ENCODE measurements at regions of chr5 and their contacts with region 1.

Region 1: DNA sequence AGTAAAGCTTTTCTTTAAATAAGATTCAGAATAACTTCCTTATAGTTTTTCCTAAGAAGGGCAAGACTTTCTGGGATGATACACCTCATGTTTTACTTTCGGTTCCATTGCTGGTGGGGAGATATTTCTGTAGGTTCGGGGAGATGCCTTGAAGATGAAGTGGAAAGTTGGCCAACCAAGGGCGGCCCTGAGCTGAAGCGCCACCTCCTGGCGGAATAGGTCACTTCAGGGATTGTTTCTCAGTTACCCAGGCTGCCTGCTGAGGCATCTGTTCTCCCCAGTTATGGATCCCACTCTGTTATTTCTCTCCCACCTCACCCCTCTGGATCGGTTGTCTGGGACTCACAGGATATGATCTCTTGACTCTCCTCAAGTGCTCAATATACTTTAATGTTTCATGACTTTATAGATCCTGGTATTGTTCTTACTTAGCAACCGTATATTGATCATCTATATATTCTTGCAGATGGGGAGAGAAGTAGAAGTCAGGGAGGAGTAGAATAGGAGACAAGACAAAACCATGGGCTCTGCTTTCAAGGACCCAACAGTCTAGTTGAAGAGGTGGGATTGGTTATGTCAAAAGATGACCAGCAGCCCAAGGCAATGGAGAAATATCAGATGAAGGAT is 23.4 kb downstream of the MEGF10 start:
- DNase-seq: peak; percentile 28 to 75 (median 59)
- ATAC-seq: peak; percentile 82
- H3K4me3 ChIP-seq: no peak overlapping the region
- H3K4me3 Mint-ChIP-seq: no peak overlapping the region
- H3K27ac ChIP-seq: no peak overlapping the region
- H3K27ac Mint-ChIP-seq: no peak overlapping the region
- H3K4me1 ChIP-seq: peaks cover 4% of the 10 kb centered on the region
- H3K4me1 Mint-ChIP-seq: no peaks in the 10 kb centered on the region
- H3K27me3 ChIP-seq: no peaks in the 10 kb centered on the region
- H3K27me3 Mint-ChIP-seq: peaks cover 5% of the 10 kb centered on the region
- CTCF ChIP-seq: peak; percentile 80

Region 2: DNA sequence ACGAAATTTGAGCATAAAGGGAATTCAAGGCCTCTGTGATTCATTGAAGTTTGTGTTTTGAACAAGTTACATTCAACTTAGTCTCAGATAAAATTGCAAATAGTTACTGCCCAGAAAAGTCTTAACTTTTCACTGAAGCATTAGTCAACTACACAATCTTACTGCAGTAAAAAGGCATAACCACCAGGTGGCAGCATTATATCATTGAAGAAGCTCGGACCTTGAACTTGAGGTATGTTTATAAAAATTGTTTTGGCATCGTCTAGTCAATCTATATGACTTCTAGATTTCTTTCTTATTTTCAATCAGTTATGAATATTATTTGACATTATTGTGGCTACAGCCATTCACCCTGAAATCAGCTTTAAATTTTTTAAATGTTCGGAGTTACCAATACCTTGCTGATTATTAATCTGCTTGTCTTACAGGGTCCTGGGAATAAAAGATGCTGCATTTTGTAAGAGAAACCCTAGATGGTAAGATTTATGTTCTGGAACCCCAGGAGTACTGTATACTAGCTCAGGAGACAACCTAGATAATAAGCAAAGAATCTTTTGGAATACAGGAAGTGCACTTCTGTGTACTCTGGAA is 974.6 kb before region 1 on chr5:
- CTCF ChIA-PET with region 1: no interaction called
- POLR2A ChIA-PET with region 1: no interaction called
- intact Hi-C with region 1: loop called in 1 of 2 experiments (anchors 10 kb)
- DNase-seq: peak in 10 of 14 experiments; percentile 12 to 79 (median 40)
- ATAC-seq: peak; percentile 46
- H3K4me3 ChIP-seq: no peak overlapping the region
- H3K4me3 Mint-ChIP-seq: no peak overlapping the region
- H3K27ac ChIP-seq: no peak overlapping the region
- H3K27ac Mint-ChIP-seq: no peak overlapping the region
- H3K4me1 ChIP-seq: no peaks in the 10 kb centered on the region
- H3K4me1 Mint-ChIP-seq: no peaks in the 10 kb centered on the region
- H3K27me3 ChIP-seq: peaks cover 4 to 21% of the 10 kb centered on the region in 2 experiments
- H3K27me3 Mint-ChIP-seq: peaks cover 42% of the 10 kb centered on the region
- CTCF ChIP-seq: peak; percentile 82

Region 3: GRCh38 chr5:126656396-126657007 is 657.5 kb before region 1 on chr5:
- CTCF ChIA-PET with region 1: no interaction called
- POLR2A ChIA-PET with region 1: no interaction called
- intact Hi-C with region 1: loop called (anchors 2 kb)
- DNase-seq: peak in 4 of 14 experiments; percentile 40 to 67 (median 56)
- ATAC-seq: no peak
- H3K4me3 ChIP-seq: no peak overlapping the region
- H3K4me3 Mint-ChIP-seq: no peak overlapping the region
- H3K27ac ChIP-seq: no peak overlapping the region
- H3K27ac Mint-ChIP-seq: no peak overlapping the region
- H3K4me1 ChIP-seq: no peaks in the 10 kb centered on the region
- H3K4me1 Mint-ChIP-seq: no peaks in the 10 kb centered on the region
- H3K27me3 ChIP-seq: no peaks in the 10 kb centered on the region
- H3K27me3 Mint-ChIP-seq: no peaks in the 10 kb centered on the region
- CTCF ChIP-seq: peak; percentile 83

Region 4: GRCh38 chr5:126676195-126676624 is 637.8 kb before region 1 on chr5:
- CTCF ChIA-PET with region 1: interaction called, 4 read pairs
- POLR2A ChIA-PET with region 1: no interaction called
- intact Hi-C with region 1: loop called (anchors 1 to 5 kb)
- DNase-seq: peak; percentile 39 to 86 (median 54)
- ATAC-seq: peak; percentile 90
- H3K4me3 ChIP-seq: no peak overlapping the region
- H3K4me3 Mint-ChIP-seq: no peak overlapping the region
- H3K27ac ChIP-seq: no peak overlapping the region
- H3K27ac Mint-ChIP-seq: no peak overlapping the region
- H3K4me1 ChIP-seq: peaks cover 4% of the 10 kb centered on the region
- H3K4me1 Mint-ChIP-seq: peaks cover 5% of the 10 kb centered on the region
- H3K27me3 ChIP-seq: no peaks in the 10 kb centered on the region
- H3K27me3 Mint-ChIP-seq: no peaks in the 10 kb centered on the region
- CTCF ChIP-seq: peak; percentile 82

Region 5: GRCh38 chr5:126837906-126838539 is 475.9 kb before region 1 on chr5:
- CTCF ChIA-PET with region 1: interaction called, 15 read pairs
- POLR2A ChIA-PET with region 1: no interaction called
- intact Hi-C with region 1: loop called (anchors 1 kb)
- DNase-seq: peak in 3 of 14 experiments; percentile 18 to 48 (median 44)
- ATAC-seq: peak; percentile 51
- H3K4me3 ChIP-seq: no peak overlapping the region
- H3K4me3 Mint-ChIP-seq: no peak overlapping the region
- H3K27ac ChIP-seq: no peak overlapping the region
- H3K27ac Mint-ChIP-seq: no peak overlapping the region
- H3K4me1 ChIP-seq: no peaks in the 10 kb centered on the region
- H3K4me1 Mint-ChIP-seq: no peaks in the 10 kb centered on the region
- H3K27me3 ChIP-seq: no peaks in the 10 kb centered on the region
- H3K27me3 Mint-ChIP-seq: no peaks in the 10 kb centered on the region
- CTCF ChIP-seq: peak; percentile 59

Region 6: DNA sequence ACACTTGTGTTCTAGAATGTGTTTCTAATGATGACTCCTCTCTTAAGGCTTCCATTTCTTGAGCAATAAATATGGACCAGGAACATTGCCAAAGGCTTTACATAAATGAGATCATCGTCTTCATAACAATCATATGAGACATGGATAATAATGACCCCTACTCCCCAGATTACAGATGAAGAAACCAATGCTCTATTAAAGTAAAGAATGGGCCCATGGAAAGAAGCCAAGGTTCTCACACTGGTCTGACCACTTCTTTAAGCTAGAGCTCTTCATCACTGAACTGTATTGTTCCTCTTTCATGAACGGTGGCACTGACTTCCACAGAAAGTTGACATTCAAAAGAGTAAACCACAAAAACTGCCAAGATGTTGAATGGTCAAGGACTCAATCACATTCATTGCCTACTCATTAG is 348.9 kb before region 1 on chr5:
- CTCF ChIA-PET with region 1: no interaction called
- POLR2A ChIA-PET with region 1: no interaction called
- intact Hi-C with region 1: loop called (anchors 1 to 10 kb)
- DNase-seq: no peak
- ATAC-seq: no peak
- H3K4me3 ChIP-seq: no peak overlapping the region
- H3K4me3 Mint-ChIP-seq: no peak overlapping the region
- H3K27ac ChIP-seq: no peak overlapping the region
- H3K27ac Mint-ChIP-seq: no peak overlapping the region
- H3K4me1 ChIP-seq: no peaks in the 10 kb centered on the region
- H3K4me1 Mint-ChIP-seq: peaks cover 4% of the 10 kb centered on the region
- H3K27me3 ChIP-seq: no peaks in the 10 kb centered on the region
- H3K27me3 Mint-ChIP-seq: no peaks in the 10 kb centered on the region
- CTCF ChIP-seq: no peak

Region 7: DNA sequence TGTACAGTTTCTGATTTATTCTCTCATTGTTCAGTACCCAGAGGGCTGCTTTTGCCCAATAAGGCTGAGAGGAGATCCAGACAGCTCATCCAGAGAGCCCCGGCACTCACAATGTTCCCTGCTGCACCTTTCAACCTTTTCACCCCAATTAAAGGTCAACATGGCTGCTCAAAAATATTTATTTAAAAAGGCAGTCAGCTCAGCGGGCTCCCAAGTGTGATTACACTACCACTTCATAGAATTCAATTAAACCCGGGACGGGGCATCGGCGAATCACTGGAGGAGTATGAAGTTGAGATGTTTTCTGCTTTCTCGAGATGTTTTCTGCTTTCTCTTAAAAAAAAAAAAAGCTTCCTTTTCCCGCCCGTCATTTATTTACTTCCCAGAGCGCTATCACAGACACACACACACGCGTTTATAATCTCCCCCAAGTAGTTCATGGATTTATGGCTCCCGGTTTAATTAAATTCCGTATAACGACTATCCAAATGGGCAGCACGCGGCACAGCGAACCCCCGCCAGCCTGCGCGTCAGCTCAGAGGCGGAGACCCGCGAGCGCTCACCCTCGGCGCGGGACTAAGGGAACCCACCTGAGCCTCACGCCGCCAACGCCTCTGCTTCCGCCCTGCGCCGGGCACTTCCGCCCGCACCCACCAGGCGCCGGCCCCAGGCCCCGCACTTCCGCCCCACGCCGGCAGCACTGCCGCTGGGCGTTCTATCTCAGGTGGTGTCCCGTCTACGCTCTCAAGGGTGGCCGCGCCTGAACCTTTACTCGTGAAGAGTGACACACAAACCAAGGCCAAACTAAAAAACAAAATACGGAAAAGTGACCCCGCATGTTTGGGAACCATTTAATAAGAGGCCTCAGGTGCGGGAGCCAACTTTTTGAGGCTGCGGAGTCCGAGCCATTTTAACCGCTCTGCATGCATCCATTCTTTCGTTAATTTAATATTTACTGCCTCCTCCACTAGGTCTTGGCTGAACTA is 240.8 kb before region 1 on chr5 and contains the start of gene C5orf63:
- CTCF ChIA-PET with region 1: no interaction called
- POLR2A ChIA-PET with region 1: no interaction called
- intact Hi-C with region 1: loop called in 1 of 2 experiments (anchors 10 kb)
- DNase-seq: peak; percentile 31 to 84 (median 56)
- ATAC-seq: peak; percentile 93
- H3K4me3 ChIP-seq: peak within 1 kb of the TSS; percentile 62
- H3K4me3 Mint-ChIP-seq: peak within 1 kb of the TSS; percentile 92
- H3K27ac ChIP-seq: peak within 1 kb of the TSS in 1 of 2 donors; percentile 4
- H3K27ac Mint-ChIP-seq: peak within 1 kb of the TSS; percentile 85
- H3K4me1 ChIP-seq: peaks cover 10% of the 10 kb centered on the region
- H3K4me1 Mint-ChIP-seq: peaks cover 34% of the 10 kb centered on the region
- H3K27me3 ChIP-seq: no peaks in the 10 kb centered on the region
- H3K27me3 Mint-ChIP-seq: no peaks in the 10 kb centered on the region
- CTCF ChIP-seq: no peak
- total RNA-seq, gene C5orf63: 5.1 to 5.7 TPM

Region 8: DNA sequence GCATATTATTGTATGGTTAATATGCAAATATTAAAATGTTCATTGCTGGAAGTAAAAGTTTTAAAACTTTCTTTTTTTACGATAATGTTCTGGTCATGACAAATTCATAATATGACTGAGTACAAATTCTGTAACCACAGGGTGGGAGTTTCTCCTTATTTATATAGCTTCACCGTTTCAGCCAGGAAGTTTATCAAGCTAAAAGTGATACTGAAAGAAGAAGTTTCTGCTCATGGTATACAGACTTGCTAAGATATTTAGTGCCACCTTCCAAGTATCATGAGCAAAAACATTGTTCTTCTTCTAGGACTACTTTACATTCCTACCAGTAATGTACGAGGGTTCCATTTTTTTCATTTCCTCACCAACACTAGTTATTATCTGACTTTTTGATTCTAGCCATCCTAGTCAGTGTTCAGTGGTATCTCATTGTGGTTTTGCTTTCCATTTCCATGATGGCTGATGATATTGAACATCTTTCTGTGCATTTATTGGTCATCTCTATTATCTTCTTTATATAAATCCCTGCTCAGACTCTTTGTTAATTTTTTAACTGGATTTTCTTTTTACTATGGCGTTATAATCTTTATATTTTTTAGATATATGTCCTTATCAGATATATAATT is 109.3 kb after region 1 on chr5:
- CTCF ChIA-PET with region 1: no interaction called
- POLR2A ChIA-PET with region 1: no interaction called
- intact Hi-C with region 1: no loop called
- DNase-seq: no peak
- ATAC-seq: no peak
- H3K4me3 ChIP-seq: no peak overlapping the region
- H3K4me3 Mint-ChIP-seq: no peak overlapping the region
- H3K27ac ChIP-seq: no peak overlapping the region
- H3K27ac Mint-ChIP-seq: no peak overlapping the region
- H3K4me1 ChIP-seq: no peaks in the 10 kb centered on the region
- H3K4me1 Mint-ChIP-seq: no peaks in the 10 kb centered on the region
- H3K27me3 ChIP-seq: no peaks in the 10 kb centered on the region
- H3K27me3 Mint-ChIP-seq: peaks cover 12% of the 10 kb centered on the region
- CTCF ChIP-seq: no peak

Measured in CD4-positive, alpha-beta T cell (primary cell).